ENCODE measurements at regions of chr19 and their contacts with region 1.

Region 1: GRCh38 chr19:16066611-16067104 is 9.6 kb upstream of the TPM4 start:
- DNase-seq: peak in 2 of 5 donors; percentile 43
- ATAC-seq: peak in 3 of 4 donors; percentile 44 to 57 (median 44)
- H3K4me3 ChIP-seq: no peak overlapping the region
- H3K27ac ChIP-seq: peak overlapping the region in 9 of 12 donors; percentile 9 to 100 (median 63)
- H3K4me1 ChIP-seq: peaks cover 0 to 34% (median 24%) of the 10 kb centered on the region in 12 donors
- H3K27me3 ChIP-seq: no peaks in the 10 kb centered on the region
- CTCF ChIP-seq: peak in 3 of 12 donors; percentile 11 to 22 (median 19)
- POLR2A ChIP-seq: no peak

Region 2: GRCh38 chr19:15944401-15944800 is 122.3 kb before region 1 on chr19:
- intact Hi-C with region 1: no loop called
- DNase-seq: no peak
- ATAC-seq: no peak
- H3K4me3 ChIP-seq: no peak overlapping the region
- H3K27ac ChIP-seq: no peak overlapping the region
- H3K4me1 ChIP-seq: no peaks in the 10 kb centered on the region
- H3K27me3 ChIP-seq: peaks cover 0 to 22% (median 5%) of the 10 kb centered on the region in 9 donors
- CTCF ChIP-seq: no peak
- POLR2A ChIP-seq: no peak

Region 3: GRCh38 chr19:16095071-16095571 is 28.5 kb after region 1 on chr19:
- intact Hi-C with region 1: loop called in 1 of 10 experiments (anchors 2 kb)
- DNase-seq: peak in 2 of 5 donors; percentile 57 to 69
- ATAC-seq: peak in 3 of 4 donors; percentile 34 to 56 (median 48)
- H3K4me3 ChIP-seq: no peak overlapping the region
- H3K27ac ChIP-seq: peak overlapping the region in 6 of 12 donors; percentile 22 to 65 (median 38)
- H3K4me1 ChIP-seq: peaks cover 0 to 7% (median 0%) of the 10 kb centered on the region in 12 donors
- H3K27me3 ChIP-seq: no peaks in the 10 kb centered on the region
- CTCF ChIP-seq: no peak
- POLR2A ChIP-seq: no peak

Region 4: DNA sequence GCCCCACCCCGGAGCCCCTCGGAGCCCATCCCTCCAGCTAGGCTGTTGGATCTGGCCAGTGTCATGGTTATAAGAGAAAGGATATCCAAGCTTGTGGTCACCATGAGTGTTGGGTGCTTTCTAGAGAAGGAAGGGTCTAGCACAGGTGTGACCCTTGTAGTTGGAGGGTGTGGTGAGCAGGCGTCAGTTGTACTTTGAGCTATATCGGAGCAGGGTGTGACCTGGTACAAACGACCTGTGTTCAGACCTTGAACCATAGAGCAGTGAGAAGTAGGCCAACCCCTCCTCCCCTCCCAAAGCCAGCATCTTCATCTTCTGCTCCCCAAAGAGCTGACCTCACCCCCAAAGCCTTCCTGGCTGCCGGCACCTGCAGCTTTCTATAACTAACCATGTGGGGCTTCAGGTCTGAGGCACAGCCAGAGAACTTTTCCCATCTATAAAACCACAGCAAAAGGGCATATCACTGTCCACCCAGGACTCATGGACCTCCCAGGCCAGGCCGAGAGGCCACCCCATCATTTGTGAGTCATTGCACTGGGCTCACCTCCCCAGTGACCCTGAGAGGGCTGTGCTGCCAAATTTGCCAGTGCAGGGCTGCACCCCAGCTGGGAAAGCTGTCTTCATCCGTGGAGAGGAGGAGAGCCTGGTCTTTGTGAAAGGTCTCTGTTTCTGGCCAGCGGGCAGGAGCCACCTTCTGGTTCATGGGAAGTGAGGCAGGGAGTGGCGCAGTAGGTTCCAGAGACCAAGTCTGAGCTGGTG is 59.3 kb after region 1 on chr19:
- intact Hi-C with region 1: no loop called
- DNase-seq: no peak
- ATAC-seq: no peak
- H3K4me3 ChIP-seq: no peak overlapping the region
- H3K27ac ChIP-seq: no peak overlapping the region
- H3K4me1 ChIP-seq: no peaks in the 10 kb centered on the region
- H3K27me3 ChIP-seq: no peaks in the 10 kb centered on the region
- CTCF ChIP-seq: no peak
- POLR2A ChIP-seq: no peak

Measured in heart left ventricle (tissue), 16 donors.